Tibial artery (tissue), 4 donors: ENCODE measurements at regions of chr1 and their contacts with region 1.

Region 1: DNA sequence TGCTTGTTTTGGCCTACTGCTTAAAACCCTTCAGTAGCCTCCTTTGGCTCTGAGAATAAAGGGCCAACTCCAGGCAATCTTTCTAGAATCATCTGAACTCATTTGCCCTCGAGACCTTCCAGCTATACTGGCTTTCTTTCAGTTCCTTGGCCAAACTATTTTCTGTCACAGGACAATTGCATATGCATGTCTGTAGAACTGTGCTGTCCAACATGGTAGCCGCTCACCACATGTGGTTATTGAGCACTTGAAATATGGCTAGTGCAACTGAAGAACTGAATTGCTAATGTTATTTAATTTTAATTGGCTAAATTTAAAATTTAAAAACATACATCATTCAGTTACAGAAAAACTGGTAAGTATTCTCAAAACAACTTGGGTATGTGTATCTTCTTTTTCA is 14.3 kb upstream of the GNL2 start:
- DNase-seq: no peak
- H3K4me3 ChIP-seq: no peak overlapping the region
- H3K27ac ChIP-seq: no peak overlapping the region
- H3K4me1 ChIP-seq: peaks cover 0 to 22% (median 6%) of the 10 kb centered on the region in 4 donors
- H3K27me3 ChIP-seq: peaks cover 0 to 26% of the 10 kb centered on the region in 2 donors
- CTCF ChIP-seq: no peak

Region 2: GRCh38 chr1:37123266-37124115 is 486.5 kb before region 1 on chr1:
- intact Hi-C with region 1: no loop called
- DNase-seq: no peak
- H3K4me3 ChIP-seq: no peak overlapping the region
- H3K27ac ChIP-seq: no peak overlapping the region
- H3K4me1 ChIP-seq: no peaks in the 10 kb centered on the region
- H3K27me3 ChIP-seq: peaks cover 0 to 33% of the 10 kb centered on the region in 2 donors
- CTCF ChIP-seq: no peak

Region 3: GRCh38 chr1:37650173-37650572 is 40.2 kb after region 1 on chr1:
- intact Hi-C with region 1: loop called (anchors 2 kb)
- DNase-seq: no peak
- H3K4me3 ChIP-seq: no peak overlapping the region
- H3K27ac ChIP-seq: no peak overlapping the region
- H3K4me1 ChIP-seq: no peaks in the 10 kb centered on the region
- H3K27me3 ChIP-seq: peaks cover 0 to 24% of the 10 kb centered on the region in 2 donors
- CTCF ChIP-seq: no peak

Region 4: DNA sequence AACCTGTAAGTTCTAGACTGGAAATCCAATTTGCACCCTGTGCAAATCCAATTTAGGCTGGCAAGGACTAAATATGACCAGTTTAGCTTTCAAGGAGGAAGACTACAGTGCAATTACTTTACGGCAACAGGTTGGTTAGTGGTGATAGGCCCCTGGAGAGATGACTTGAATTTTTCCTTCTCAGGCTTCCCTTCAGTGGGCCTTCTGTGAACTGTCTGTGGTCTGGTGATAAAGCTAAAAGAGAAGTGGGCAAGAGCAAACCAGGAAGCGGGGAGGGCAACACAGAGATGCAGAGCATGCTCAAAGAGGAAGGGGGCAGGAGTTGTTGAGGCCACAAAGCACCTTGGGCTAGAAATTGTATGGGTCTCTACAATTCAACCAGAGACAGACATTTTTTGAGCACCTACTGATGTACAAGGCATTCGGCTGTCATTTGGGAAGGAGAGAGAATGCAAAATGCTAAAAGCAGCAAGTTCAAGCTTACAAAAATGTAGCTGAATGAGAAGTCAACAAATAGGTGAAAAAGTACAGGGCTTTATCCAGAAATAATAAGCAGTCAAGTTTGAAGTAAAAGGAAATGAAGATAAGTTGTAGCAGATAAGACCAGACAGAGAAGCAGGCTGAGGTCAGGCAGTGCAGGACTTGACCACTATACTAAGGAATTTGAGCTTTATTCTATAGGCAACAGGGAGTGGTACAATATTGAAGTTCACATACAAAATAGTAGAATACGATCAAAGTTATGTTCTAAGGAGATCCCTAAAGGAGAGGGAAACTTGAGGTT is 313.0 kb after region 1 on chr1:
- intact Hi-C with region 1: no loop called
- DNase-seq: no peak
- H3K4me3 ChIP-seq: no peak overlapping the region
- H3K27ac ChIP-seq: no peak overlapping the region
- H3K4me1 ChIP-seq: peaks cover 0 to 50% (median 17%) of the 10 kb centered on the region in 4 donors
- H3K27me3 ChIP-seq: no peaks in the 10 kb centered on the region
- CTCF ChIP-seq: no peak